ENCODE measurements at regions of chr12 and their contacts with region 1.

Region 1: GRCh38 chr12:54294152-54294952 is 6.5 kb downstream of the NFE2 start:
- DNase-seq: no peak
- ATAC-seq: peak; percentile 81
- H3K4me3 ChIP-seq: no peak overlapping the region
- H3K27ac ChIP-seq: no peak overlapping the region
- H3K4me1 ChIP-seq: no peaks in the 10 kb centered on the region
- H3K27me3 ChIP-seq: peaks cover 0 to 4% of the 10 kb centered on the region in 2 experiments
- CTCF ChIP-seq: peak; percentile 74 to 94 (median 91)
- EP300 ChIP-seq: no peak
- POLR2A ChIP-seq: no peak
- RAD21 ChIP-seq: peak; percentile 86

Region 2: GRCh38 chr12:54040148-54040494 is 254.2 kb before region 1 on chr12:
- CTCF ChIA-PET with region 1: no interaction called
- POLR2A ChIA-PET with region 1: no interaction called
- RAD21 ChIA-PET with region 1: no interaction called
- SMC1A ChIA-PET with region 1: no interaction called
- in situ Hi-C with region 1: no loop called
- intact Hi-C with region 1: no loop called
- DNase-seq: no peak
- ATAC-seq: peak; percentile 41; the same call in 2 of the 3 replicates
- H3K4me3 ChIP-seq: no peak overlapping the region
- H3K27ac ChIP-seq: no peak overlapping the region
- H3K4me1 ChIP-seq: no peaks in the 10 kb centered on the region
- H3K27me3 ChIP-seq: peaks cover 1 to 7% of the 10 kb centered on the region in 2 experiments; a peak in 2 of 4 replicates
- CTCF ChIP-seq: no peak
- EP300 ChIP-seq: no peak
- POLR2A ChIP-seq: no peak
- RAD21 ChIP-seq: no peak

Region 3: DNA sequence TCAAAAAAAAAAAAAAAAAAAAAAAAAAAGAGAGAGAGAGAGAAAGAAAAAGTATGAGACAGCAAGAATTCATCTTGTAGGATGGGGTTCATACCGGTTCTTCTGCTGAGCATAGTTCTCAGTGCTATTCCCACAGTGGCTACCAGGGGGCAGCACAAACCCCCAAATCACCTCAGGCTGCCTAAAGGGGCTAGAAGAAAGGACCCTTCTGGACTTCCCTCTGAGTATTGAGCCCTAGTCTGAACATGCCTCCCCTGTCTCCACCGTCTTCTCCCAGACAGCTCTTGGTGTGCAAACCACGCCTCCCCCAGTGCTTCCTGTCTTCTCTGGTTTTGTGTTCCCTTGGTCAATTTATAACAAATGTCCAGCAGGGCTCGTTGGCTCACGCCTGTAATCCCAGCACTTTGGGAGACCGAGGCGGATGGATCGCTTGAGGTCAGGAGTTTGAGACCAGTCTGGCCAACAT is 74.2 kb before region 1 on chr12:
- CTCF ChIA-PET with region 1: interaction called, 10 read pairs
- POLR2A ChIA-PET with region 1: no interaction called
- RAD21 ChIA-PET with region 1: interaction called, 3 read pairs
- SMC1A ChIA-PET with region 1: interaction called, 5 read pairs
- in situ Hi-C with region 1: no loop called
- intact Hi-C with region 1: no loop called
- DNase-seq: no peak
- ATAC-seq: peak; percentile 58
- H3K4me3 ChIP-seq: no peak overlapping the region
- H3K27ac ChIP-seq: no peak overlapping the region
- H3K4me1 ChIP-seq: peaks cover 30% of the 10 kb centered on the region
- H3K27me3 ChIP-seq: peaks cover 0 to 1% of the 10 kb centered on the region in 2 experiments; a peak in 1 of 4 replicates
- CTCF ChIP-seq: peak; percentile 84 to 90 (median 90)
- EP300 ChIP-seq: no peak
- POLR2A ChIP-seq: no peak
- RAD21 ChIP-seq: peak; percentile 87

Region 4: GRCh38 chr12:54240971-54241588 is 53.3 kb before region 1 on chr12:
- CTCF ChIA-PET with region 1: interaction called, 10 read pairs
- POLR2A ChIA-PET with region 1: interaction called, 3 read pairs
- RAD21 ChIA-PET with region 1: no interaction called
- SMC1A ChIA-PET with region 1: no interaction called
- in situ Hi-C with region 1: no loop called
- intact Hi-C with region 1: no loop called
- DNase-seq: peak; percentile 80
- ATAC-seq: peak; percentile 95
- H3K4me3 ChIP-seq: no peak overlapping the region
- H3K27ac ChIP-seq: peak overlapping the region; percentile 45
- H3K4me1 ChIP-seq: peaks cover 16% of the 10 kb centered on the region
- H3K27me3 ChIP-seq: no peaks in the 10 kb centered on the region
- CTCF ChIP-seq: no peak
- EP300 ChIP-seq: 0 out of 4 replicates have a peak, but pooled peaks of 1 of the 2 experiments have one; percentile 39
- POLR2A ChIP-seq: no peak
- RAD21 ChIP-seq: no peak

Region 5: DNA sequence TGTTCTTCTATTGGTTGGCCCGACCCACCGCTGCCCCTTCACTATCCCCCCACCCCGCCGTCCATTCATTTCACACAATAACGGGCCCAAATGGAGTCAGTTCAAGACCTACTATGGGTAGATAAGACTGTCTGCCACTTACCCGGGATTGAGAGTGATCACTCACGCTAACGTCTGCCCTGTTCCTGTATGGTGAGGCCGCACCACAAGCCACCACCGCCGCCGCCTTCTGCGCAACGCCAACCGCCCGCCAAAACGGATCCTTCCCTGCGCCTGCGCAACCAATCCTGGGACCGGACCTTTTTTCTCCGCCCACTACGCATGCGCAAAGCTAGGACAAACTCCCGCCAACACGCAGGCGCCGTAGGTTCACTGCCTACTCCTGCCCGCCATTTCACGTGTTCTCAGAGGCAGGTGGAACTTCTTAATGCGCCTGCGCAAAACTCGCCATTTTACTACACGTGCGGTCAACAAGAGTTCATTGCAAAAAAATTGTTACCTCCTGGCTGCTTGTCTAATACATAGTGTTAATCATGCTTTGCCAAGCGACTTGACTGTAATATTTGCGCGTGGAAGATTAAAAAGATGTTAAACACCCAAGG is 14.4 kb before region 1 on chr12 and contains the start of gene CBX5:
- CTCF ChIA-PET with region 1: interaction called, 29 read pairs
- POLR2A ChIA-PET with region 1: interaction called, 20 read pairs
- RAD21 ChIA-PET with region 1: interaction called, 3 read pairs
- SMC1A ChIA-PET with region 1: interaction called, 17 read pairs
- in situ Hi-C with region 1: no loop called
- intact Hi-C with region 1: no loop called
- DNase-seq: peak; percentile 98
- ATAC-seq: peak; percentile 48
- H3K4me3 ChIP-seq: peak within 1 kb of the TSS; percentile 81
- H3K27ac ChIP-seq: peak within 1 kb of the TSS; percentile 99
- H3K4me1 ChIP-seq: peaks cover 18% of the 10 kb centered on the region
- H3K27me3 ChIP-seq: no peaks in the 10 kb centered on the region
- CTCF ChIP-seq: no peak
- EP300 ChIP-seq: no peak
- POLR2A ChIP-seq: peak; percentile 83
- RAD21 ChIP-seq: no peak
- polyA plus RNA-seq, gene CBX5: 66.9 to 67.1 TPM

Region 6: DNA sequence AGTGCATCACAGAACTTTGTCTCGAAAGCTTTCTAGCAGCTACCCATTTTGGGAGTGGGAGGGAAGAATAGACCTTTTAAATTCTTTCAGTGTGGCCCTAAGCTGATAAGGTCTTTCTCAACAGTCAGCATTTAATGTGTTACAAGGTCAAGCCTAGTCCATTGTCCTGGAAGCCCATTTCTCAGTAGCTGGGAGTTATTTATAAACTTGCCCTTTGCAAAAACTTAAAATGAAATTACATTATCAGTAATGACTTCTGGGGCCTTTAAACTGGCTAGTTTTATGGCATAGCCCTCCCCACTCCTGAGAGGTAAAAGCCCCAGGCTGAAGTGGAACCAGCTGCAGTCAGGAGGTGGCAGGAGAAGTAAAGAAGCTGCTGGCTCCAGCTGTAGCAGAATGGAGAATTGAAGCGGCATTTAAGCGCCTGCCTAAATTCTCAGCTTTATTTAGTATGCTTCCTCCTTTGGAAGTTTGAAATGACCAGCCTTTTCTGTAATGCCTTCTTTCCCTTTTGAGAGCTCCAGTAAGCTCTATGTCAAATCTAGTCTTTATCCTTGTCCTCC is 43.0 kb after region 1 on chr12:
- CTCF ChIA-PET with region 1: interaction called, 66 read pairs
- POLR2A ChIA-PET with region 1: interaction called, 4 read pairs
- RAD21 ChIA-PET with region 1: interaction called, 3 read pairs
- SMC1A ChIA-PET with region 1: interaction called, 4 read pairs
- in situ Hi-C with region 1: no loop called
- intact Hi-C with region 1: no loop called
- DNase-seq: no peak
- ATAC-seq: no peak
- H3K4me3 ChIP-seq: no peak overlapping the region
- H3K27ac ChIP-seq: no peak overlapping the region
- H3K4me1 ChIP-seq: no peaks in the 10 kb centered on the region
- H3K27me3 ChIP-seq: no peaks in the 10 kb centered on the region
- CTCF ChIP-seq: 0 out of 6 replicates have a peak, but pooled peaks of 1 of the 3 experiments have one; percentile 5
- EP300 ChIP-seq: no peak
- POLR2A ChIP-seq: no peak
- RAD21 ChIP-seq: 0 out of 2 replicates have a peak, but pooled peaks have one; percentile 16

Region 7: GRCh38 chr12:54368709-54369583 is 74.6 kb after region 1 on chr12:
- CTCF ChIA-PET with region 1: interaction called, 116 read pairs
- POLR2A ChIA-PET with region 1: interaction called, 3 read pairs
- RAD21 ChIA-PET with region 1: interaction called, 5 read pairs
- SMC1A ChIA-PET with region 1: interaction called, 7 read pairs
- in situ Hi-C with region 1: loop called (anchors 5 kb)
- intact Hi-C with region 1: loop called (anchors 1 kb)
- DNase-seq: no peak
- ATAC-seq: peak; percentile 92
- H3K4me3 ChIP-seq: no peak overlapping the region
- H3K27ac ChIP-seq: no peak overlapping the region
- H3K4me1 ChIP-seq: peaks cover 24% of the 10 kb centered on the region
- H3K27me3 ChIP-seq: no peaks in the 10 kb centered on the region
- CTCF ChIP-seq: peak; percentile 91 to 99 (median 98); a peak in 5 of 6 replicates
- EP300 ChIP-seq: no peak
- POLR2A ChIP-seq: no peak
- RAD21 ChIP-seq: peak; percentile 93

Region 8: GRCh38 chr12:54379401-54380201 is 85.2 kb after region 1 on chr12:
- CTCF ChIA-PET with region 1: interaction called, 15 read pairs
- POLR2A ChIA-PET with region 1: no interaction called
- RAD21 ChIA-PET with region 1: interaction called, 5 read pairs
- SMC1A ChIA-PET with region 1: interaction called, 4 read pairs
- in situ Hi-C with region 1: no loop called
- intact Hi-C with region 1: no loop called
- DNase-seq: no peak
- ATAC-seq: peak; percentile 95
- H3K4me3 ChIP-seq: no peak overlapping the region
- H3K27ac ChIP-seq: no peak overlapping the region
- H3K4me1 ChIP-seq: peaks cover 4% of the 10 kb centered on the region
- H3K27me3 ChIP-seq: no peaks in the 10 kb centered on the region
- CTCF ChIP-seq: peak; percentile 100; a peak in 5 of 6 replicates
- EP300 ChIP-seq: no peak
- POLR2A ChIP-seq: no peak
- RAD21 ChIP-seq: peak; percentile 73